Activated CD4-positive, alpha-beta T cell treated with anti-CD3 and anti-CD28 coated beads for 36 hours (primary cell): ENCODE measurements at regions of chr2 and their contacts with region 1.

Region 1: DNA sequence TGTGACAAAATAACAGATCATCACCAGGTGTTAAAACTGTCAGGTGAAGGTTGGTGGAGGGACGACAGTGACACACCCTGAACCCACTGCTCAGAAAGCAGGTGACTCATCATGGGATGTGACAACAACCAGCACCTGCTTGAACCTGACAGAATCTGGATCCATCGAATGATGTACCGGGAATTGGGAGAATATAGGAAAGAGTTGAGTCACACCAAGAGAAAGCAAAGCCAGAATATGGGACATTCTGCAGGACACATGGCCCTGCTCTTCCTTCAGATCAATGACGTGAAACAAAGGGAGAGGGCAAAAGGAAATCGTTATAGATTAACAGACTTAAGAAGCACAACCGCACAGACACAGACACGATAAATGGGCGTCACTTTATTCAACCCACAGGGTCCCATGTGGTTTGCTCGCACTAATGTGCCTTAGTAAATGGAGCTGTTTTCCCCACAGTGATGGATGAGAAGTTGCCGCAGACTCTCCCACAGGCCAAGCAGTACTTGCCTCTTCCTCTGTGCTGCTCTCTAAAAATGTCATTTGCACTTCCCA is 100.1 kb downstream of the CRACDL start:
- DNase-seq: peak; percentile 57
- ATAC-seq: peak; percentile 78
- H3K4me3 Mint-ChIP-seq: no peak overlapping the region
- H3K27ac Mint-ChIP-seq: peak overlapping the region; percentile 79
- H3K4me1 Mint-ChIP-seq: peaks cover 29% of the 10 kb centered on the region
- H3K27me3 Mint-ChIP-seq: no peaks in the 10 kb centered on the region

Region 2: GRCh38 chr2:98433363-98433964 is 402.4 kb before region 1 on chr2:
- CTCF ChIA-PET with region 1: no interaction called
- POLR2A ChIA-PET with region 1: no interaction called
- intact Hi-C with region 1: no loop called
- DNase-seq: no peak
- ATAC-seq: no peak
- H3K4me3 Mint-ChIP-seq: no peak overlapping the region
- H3K27ac Mint-ChIP-seq: no peak overlapping the region
- H3K4me1 Mint-ChIP-seq: peaks cover 7% of the 10 kb centered on the region
- H3K27me3 Mint-ChIP-seq: no peaks in the 10 kb centered on the region

Region 3: DNA sequence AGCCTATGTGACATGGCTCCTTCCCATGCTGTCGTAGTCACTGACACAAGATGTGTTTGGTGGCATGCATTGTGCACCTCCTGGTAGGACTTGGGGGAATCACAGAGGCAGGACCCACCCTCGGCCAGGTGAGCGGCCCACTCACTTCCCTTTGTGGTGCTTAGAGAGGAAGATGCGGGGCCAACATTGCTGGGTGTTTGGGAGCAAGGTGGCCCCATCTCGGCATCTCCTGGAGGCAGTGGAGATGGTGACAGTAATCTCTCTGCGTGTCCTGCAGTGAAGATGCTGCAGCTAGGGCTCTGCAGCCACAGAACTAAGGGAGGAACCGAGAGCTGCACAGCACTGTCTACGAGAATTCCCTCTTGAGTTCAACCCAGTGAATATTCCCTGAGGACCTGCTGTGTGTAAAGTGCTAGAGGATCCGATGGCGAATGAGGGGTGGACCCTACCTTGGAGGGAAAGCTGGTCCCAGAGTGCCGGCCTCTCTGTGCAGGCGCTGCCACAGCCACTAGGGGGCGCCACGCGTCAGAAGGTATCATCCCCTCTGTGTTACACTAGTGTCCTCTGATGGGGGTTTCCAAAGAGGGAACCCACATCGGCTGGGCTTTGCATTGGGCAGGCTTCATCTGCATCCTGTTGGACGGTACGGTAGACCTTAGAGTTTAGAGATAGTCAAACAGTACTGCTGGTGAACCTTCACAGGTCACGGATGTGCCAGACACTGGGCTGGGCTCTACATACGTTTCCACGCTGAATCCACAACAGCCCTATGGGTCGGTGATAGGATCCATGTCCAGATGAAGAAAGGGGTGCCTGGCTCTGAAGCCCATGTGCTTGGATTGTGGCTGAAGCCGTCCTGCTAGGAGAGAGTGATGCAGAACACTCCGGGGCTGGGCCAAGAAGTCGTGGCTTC is 266.8 kb before region 1 on chr2:
- CTCF ChIA-PET with region 1: no interaction called
- POLR2A ChIA-PET with region 1: no interaction called
- intact Hi-C with region 1: loop called (anchors 1 to 2 kb)
- DNase-seq: peak; percentile 86
- ATAC-seq: peak; percentile 89
- H3K4me3 Mint-ChIP-seq: no peak overlapping the region
- H3K27ac Mint-ChIP-seq: no peak overlapping the region
- H3K4me1 Mint-ChIP-seq: peaks cover 4% of the 10 kb centered on the region
- H3K27me3 Mint-ChIP-seq: no peaks in the 10 kb centered on the region

Region 4: GRCh38 chr2:98608116-98608999 is 227.6 kb before region 1 on chr2 and contains the starts of genes COA5 and UNC50:
- CTCF ChIA-PET with region 1: interaction called, 3 read pairs
- POLR2A ChIA-PET with region 1: no interaction called
- intact Hi-C with region 1: loop called in 1 of 2 experiments (anchors 1 kb)
- DNase-seq: peak; percentile 95
- ATAC-seq: peak; percentile 91
- H3K4me3 Mint-ChIP-seq: peak within 1 kb of the TSS; percentile 83
- H3K27ac Mint-ChIP-seq: peak within 1 kb of the TSS; percentile 94
- H3K4me1 Mint-ChIP-seq: peaks cover 61% of the 10 kb centered on the region
- H3K27me3 Mint-ChIP-seq: no peaks in the 10 kb centered on the region
- total RNA-seq, gene COA5: 17.7 to 33.2 TPM
- total RNA-seq, gene UNC50: 21.1 to 31.4 TPM

Region 5: DNA sequence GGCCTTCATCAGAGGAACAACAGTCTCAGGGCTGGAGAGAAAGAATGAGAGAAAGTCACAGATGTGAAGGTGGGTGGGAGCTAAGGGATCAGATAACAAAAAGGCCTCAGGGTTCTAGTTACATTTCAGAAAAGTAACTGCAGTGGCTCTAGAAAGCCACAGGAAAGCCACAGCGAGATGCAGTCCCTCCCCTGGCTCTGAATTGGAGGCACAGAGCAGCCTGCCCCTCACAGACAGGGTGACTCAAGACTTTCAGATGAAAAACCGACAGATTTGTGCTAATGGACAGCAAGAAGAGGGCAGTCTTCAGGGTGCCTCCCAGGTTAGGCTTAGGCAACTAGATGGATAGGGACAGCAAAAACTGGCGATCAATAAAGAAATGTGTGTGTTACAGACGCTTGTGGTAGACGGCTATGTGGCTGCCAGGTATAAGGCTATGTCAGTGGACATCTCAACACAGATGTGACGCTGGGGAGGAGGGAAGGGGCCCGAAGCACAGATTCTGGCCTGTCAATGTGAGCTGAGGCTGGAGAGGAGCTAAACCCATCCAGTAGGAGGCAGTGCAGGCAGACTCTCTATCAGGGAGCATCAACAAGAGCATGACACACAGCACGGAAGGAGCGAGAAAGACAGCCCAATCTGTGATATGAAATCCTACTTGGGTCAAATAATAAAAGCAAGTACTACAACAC is 201.4 kb before region 1 on chr2:
- CTCF ChIA-PET with region 1: interaction called, 7 read pairs
- POLR2A ChIA-PET with region 1: no interaction called
- intact Hi-C with region 1: loop called in 1 of 2 experiments (anchors 1 kb)
- DNase-seq: peak; percentile 79
- ATAC-seq: peak; percentile 67
- H3K4me3 Mint-ChIP-seq: peak overlapping the region; percentile 44
- H3K27ac Mint-ChIP-seq: peak overlapping the region; percentile 85
- H3K4me1 Mint-ChIP-seq: peaks cover 38% of the 10 kb centered on the region
- H3K27me3 Mint-ChIP-seq: no peaks in the 10 kb centered on the region

Region 6: DNA sequence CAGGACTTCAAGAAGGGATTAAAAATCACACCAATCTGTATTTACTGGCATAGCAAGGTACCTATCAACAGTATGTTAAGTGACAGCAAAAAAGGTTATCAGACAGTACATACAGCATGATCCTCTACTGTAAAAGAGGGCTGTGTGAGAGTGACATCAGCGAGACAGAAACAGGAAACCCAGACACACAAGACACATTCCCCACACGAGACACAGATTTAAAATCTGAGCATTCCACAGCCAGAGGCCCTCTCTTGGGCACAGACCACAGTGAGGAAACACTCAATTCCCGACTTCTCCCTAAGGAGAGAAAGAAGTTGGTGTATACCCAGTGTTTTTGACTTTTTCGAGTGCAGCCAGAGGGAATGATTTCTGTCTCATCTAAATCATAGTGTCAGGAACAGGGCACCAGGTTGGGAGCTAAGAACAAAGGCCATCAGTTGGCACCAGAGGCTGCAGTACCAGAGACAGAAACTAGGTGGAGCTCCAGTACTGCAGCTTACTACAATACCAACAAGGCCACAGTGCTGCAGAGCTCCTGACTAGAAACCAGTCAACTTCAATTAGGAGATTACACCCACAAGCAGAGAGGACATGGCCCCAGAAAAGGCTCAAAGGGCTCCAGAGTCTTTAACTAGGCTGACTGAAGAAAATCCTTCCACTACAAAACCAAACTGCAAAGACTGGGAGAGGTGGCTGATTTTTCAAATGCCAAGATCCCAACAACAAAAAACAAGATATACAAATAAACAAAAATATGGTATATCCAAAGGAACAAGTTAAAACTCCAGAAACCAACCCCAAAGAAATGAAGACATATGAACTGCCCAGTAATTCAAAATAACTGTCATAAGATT is 186.5 kb before region 1 on chr2:
- CTCF ChIA-PET with region 1: interaction called, 41 read pairs
- POLR2A ChIA-PET with region 1: interaction called, 9 read pairs
- intact Hi-C with region 1: loop called (anchors 1 kb)
- DNase-seq: peak; percentile 88
- ATAC-seq: peak; percentile 93
- H3K4me3 Mint-ChIP-seq: no peak overlapping the region
- H3K27ac Mint-ChIP-seq: peak overlapping the region; percentile 73
- H3K4me1 Mint-ChIP-seq: peaks cover 58% of the 10 kb centered on the region
- H3K27me3 Mint-ChIP-seq: no peaks in the 10 kb centered on the region

Region 7: GRCh38 chr2:99066075-99066958 is 230.4 kb after region 1 on chr2:
- CTCF ChIA-PET with region 1: no interaction called
- POLR2A ChIA-PET with region 1: no interaction called
- intact Hi-C with region 1: loop called in 1 of 2 experiments (anchors 5 kb)
- DNase-seq: peak; percentile 46
- ATAC-seq: peak; percentile 98
- H3K4me3 Mint-ChIP-seq: no peak overlapping the region
- H3K27ac Mint-ChIP-seq: no peak overlapping the region
- H3K4me1 Mint-ChIP-seq: no peaks in the 10 kb centered on the region
- H3K27me3 Mint-ChIP-seq: no peaks in the 10 kb centered on the region

Region 8: GRCh38 chr2:99644419-99644787 is 808.5 kb after region 1 on chr2:
- CTCF ChIA-PET with region 1: no interaction called
- POLR2A ChIA-PET with region 1: no interaction called
- intact Hi-C with region 1: no loop called
- DNase-seq: no peak
- ATAC-seq: no peak
- H3K4me3 Mint-ChIP-seq: no peak overlapping the region
- H3K27ac Mint-ChIP-seq: no peak overlapping the region
- H3K4me1 Mint-ChIP-seq: no peaks in the 10 kb centered on the region
- H3K27me3 Mint-ChIP-seq: no peaks in the 10 kb centered on the region